Esophagus squamous epithelium (tissue), 5 donors: ENCODE measurements at regions of chr16 and their contacts with region 1.

Region 1: DNA sequence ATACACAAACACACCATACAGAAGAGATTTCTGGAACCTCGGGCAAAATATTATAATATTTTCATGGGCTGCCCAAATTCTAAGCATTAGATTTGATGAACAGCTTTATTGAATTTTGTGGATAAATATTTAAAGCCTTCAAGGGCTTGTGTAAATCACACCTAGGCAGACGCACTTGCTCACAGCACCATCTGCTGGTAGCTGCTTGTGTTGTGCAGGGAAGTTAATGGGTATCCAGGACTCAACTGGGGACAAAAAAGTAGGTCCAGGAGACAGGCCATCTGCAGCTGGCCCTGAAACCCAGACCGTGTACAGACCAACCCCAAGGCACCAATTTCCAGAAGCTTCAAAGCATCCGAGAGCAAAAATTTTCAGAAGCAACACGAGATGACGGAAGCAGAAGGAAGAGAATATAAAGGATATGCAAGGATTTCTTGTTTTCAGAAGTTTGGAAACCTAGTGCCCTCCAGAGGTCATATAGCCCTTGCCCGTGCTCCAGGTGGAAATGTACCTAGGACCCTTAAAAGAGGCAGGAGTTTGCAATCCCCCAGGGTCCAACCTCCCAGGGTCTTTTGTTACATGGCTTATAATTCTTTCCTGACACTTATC is 140.0 kb downstream of the CHD9NB start:
- DNase-seq: no peak
- H3K4me3 ChIP-seq: no peak overlapping the region
- H3K27ac ChIP-seq: no peak overlapping the region
- H3K4me1 ChIP-seq: no peaks in the 10 kb centered on the region
- H3K27me3 ChIP-seq: peaks cover 0 to 4% (median 0%) of the 10 kb centered on the region in 4 donors
- CTCF ChIP-seq: peak; percentile 29 to 79 (median 64)
- POLR2A ChIP-seq: no peak

Region 2: GRCh38 chr16:52184336-52184735 is 728.3 kb before region 1 on chr16:
- intact Hi-C with region 1: loop called (anchors 10 kb)
- DNase-seq: no peak
- H3K4me3 ChIP-seq: no peak overlapping the region
- H3K27ac ChIP-seq: no peak overlapping the region
- H3K4me1 ChIP-seq: no peaks in the 10 kb centered on the region
- H3K27me3 ChIP-seq: no peaks in the 10 kb centered on the region
- CTCF ChIP-seq: no peak
- POLR2A ChIP-seq: no peak

Region 3: GRCh38 chr16:52874042-52874441 is 38.6 kb before region 1 on chr16:
- intact Hi-C with region 1: no loop called
- DNase-seq: no peak
- H3K4me3 ChIP-seq: no peak overlapping the region
- H3K27ac ChIP-seq: no peak overlapping the region
- H3K4me1 ChIP-seq: no peaks in the 10 kb centered on the region
- H3K27me3 ChIP-seq: peaks cover 0 to 5% (median 0%) of the 10 kb centered on the region in 4 donors
- CTCF ChIP-seq: no peak
- POLR2A ChIP-seq: no peak

Region 4: DNA sequence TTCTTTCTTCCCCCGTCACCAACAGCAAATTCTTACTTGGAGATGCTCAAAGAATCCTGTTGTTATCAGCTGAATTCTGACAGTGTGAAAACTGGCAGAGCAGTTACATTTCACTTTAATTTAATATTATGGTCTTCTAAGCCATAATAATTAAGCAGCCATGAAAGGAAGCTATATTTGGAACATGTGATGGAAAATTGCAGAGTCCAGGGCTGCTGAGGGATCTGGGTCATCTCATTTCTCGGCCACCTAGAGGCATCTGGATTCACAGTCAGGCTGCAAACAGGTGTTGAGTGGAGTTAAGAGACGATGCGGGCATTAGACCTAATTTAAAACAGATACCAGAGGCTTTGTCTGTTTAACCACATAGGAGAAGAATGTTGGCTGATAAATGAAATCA is 101.6 kb after region 1 on chr16:
- intact Hi-C with region 1: no loop called
- DNase-seq: no peak
- H3K4me3 ChIP-seq: no peak overlapping the region
- H3K27ac ChIP-seq: no peak overlapping the region
- H3K4me1 ChIP-seq: no peaks in the 10 kb centered on the region
- H3K27me3 ChIP-seq: peaks cover 0 to 15% (median 0%) of the 10 kb centered on the region in 4 donors
- CTCF ChIP-seq: no peak
- POLR2A ChIP-seq: no peak

Region 5: DNA sequence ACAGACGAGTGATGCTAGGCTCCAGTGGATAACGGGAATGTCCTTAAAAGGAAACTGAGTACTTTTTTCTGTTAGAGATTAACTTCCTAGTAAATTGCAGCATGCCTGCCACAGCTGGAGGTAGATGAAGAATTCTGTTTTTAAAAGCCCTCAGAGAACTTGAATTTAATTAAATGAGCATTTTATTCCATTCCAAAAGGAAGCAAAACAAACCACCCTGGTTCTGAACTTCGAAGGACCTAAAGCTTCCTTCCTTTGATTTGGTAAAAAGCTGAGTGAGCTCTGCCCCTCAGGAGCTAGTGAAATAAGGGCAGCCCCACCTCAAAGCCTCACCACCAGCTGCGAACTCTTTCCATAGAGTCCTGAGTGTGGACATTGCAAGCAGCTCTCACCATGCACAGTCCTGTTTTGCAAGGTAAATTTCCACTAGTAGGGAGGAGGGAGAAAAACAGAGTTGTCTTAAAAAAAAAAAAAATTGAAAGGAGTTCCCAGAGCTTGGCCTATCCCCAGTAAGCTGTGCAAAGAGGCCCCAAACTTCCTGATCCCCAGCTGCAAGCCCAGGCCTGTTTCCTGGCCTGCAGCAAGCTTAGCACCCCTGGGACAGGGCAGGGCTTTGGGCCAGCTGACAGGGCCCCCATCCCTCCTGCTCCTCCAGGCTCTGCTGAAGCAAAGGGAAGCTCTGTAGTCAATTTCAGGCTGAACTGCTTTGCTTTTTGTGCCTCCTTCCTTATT is 128.8 kb after region 1 on chr16:
- intact Hi-C with region 1: no loop called
- DNase-seq: no peak
- H3K4me3 ChIP-seq: peak overlapping the region in 3 of 4 donors; percentile 38 to 52 (median 39)
- H3K27ac ChIP-seq: peak overlapping the region; percentile 84 to 94 (median 90)
- H3K4me1 ChIP-seq: peaks cover 31 to 92% (median 43%) of the 10 kb centered on the region in 3 donors
- H3K27me3 ChIP-seq: no peaks in the 10 kb centered on the region
- CTCF ChIP-seq: no peak
- POLR2A ChIP-seq: peak in 1 of 4 donors; percentile 42

Region 6: GRCh38 chr16:53054670-53055485 is 142.2 kb after region 1 on chr16 and contains the start of gene CHD9:
- intact Hi-C with region 1: no loop called
- DNase-seq: no peak
- H3K4me3 ChIP-seq: peak within 1 kb of the TSS; percentile 72 to 92 (median 82)
- H3K27ac ChIP-seq: peak within 1 kb of the TSS; percentile 92 to 95 (median 94)
- H3K4me1 ChIP-seq: peaks cover 13 to 71% (median 20%) of the 10 kb centered on the region in 3 donors
- H3K27me3 ChIP-seq: no peaks in the 10 kb centered on the region
- CTCF ChIP-seq: peak; percentile 99 to 100 (median 99)
- POLR2A ChIP-seq: peak in 1 of 4 donors; percentile 11
- total RNA-seq, gene CHD9: 29.0 to 68.5 (median 37.3) TPM